Activated CD4-positive, alpha-beta memory T cell treated with anti-CD3 and anti-CD28 coated beads for 36 hours (primary cell): ENCODE measurements at regions of chr4 and their contacts with region 1.

Region 1: DNA sequence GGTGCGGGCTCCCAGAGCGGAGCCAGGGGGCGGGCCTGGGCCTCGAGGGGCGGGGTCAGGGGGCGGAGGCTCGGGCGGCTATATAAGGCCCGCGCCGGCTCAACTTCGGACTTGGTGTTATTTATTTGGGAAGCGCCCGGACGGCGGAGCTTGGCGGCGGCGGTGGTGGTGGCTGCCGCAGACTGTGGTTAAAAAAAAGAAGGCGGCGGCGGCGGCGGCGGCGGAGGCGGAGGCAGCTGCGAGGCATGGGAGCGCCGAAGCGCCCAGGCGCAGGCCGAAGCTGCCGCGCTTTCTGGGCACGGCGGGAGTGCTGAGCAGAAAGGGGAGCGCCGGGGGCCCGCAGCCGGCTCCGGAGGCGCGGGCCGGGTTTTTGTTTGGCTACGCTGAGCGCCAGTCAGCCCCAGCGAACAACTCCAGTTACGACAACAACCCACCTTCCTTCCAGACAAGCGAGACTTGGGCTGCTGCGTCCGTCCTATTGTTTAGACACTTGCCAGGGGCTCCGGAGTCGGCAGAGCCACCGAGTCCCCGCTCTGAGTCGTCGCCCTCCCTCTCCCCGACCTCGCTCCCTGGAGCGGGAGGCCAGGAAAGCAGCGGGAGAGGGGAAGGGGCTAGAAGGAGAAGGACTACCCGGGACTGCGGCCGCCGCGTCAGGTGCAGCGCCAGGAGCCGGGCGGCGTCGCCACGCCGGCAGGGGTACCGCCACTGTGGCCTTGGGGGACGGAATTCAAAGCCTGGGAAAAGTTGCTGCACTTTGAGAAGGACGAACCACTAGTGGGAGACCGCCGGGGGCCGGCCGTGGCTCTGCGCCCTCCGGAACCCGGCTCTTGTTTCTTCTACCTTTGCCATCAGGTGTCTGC is at the start of gene SLIT2:
- DNase-seq: peak; percentile 30
- H3K4me3 Mint-ChIP-seq: no peak within 1 kb of the TSS
- H3K27ac Mint-ChIP-seq: no peak within 1 kb of the TSS
- H3K4me1 Mint-ChIP-seq: peaks cover 6% of the 10 kb centered on the region
- H3K27me3 Mint-ChIP-seq: peaks cover 39% of the 10 kb centered on the region
- total RNA-seq, gene SLIT2: not detected

Region 2: DNA sequence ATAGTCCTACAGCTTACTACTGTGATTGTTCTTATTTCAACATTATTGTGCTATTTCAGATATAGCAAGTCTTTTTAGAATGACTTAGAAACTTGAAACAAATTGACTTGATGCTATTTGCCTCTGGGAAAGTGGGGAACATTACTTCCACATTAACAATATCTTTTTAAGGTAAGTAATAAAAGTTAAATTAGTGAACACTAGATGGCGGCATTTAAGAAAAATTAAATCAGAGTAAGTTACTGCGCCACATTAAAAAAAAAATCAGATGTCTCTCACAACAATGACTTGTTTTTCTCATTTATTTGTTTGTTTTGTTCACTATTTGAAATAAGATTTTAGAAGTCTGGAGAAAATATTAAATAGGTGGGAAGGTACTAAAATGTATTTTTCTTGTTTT is 1027.2 kb before region 1 on chr4:
- CTCF ChIA-PET with region 1: no interaction called
- POLR2A ChIA-PET with region 1: no interaction called
- intact Hi-C with region 1: loop called (anchors 10 kb)
- DNase-seq: no peak
- H3K4me3 Mint-ChIP-seq: no peak overlapping the region
- H3K27ac Mint-ChIP-seq: no peak overlapping the region
- H3K4me1 Mint-ChIP-seq: no peaks in the 10 kb centered on the region
- H3K27me3 Mint-ChIP-seq: no peaks in the 10 kb centered on the region